B cell (primary cell): ENCODE measurements at regions of chr5 and their contacts with region 1.

Region 1: GRCh38 chr5:77030097-77031071 is at the start of gene AGGF1:
- DNase-seq: peak; percentile 89
- ATAC-seq: peak; percentile 98
- H3K4me3 ChIP-seq: peak within 1 kb of the TSS; percentile 71 to 99 (median 94)
- H3K4me3 Mint-ChIP-seq: peak within 1 kb of the TSS; percentile 96
- H3K27ac ChIP-seq: peak within 1 kb of the TSS; percentile 65 to 84
- H3K27ac Mint-ChIP-seq: peak within 1 kb of the TSS; percentile 90
- H3K4me1 ChIP-seq: peaks cover 16 to 19% of the 10 kb centered on the region in 2 donors
- H3K4me1 Mint-ChIP-seq: peaks cover 31% of the 10 kb centered on the region
- H3K27me3 ChIP-seq: no peaks in the 10 kb centered on the region
- H3K27me3 Mint-ChIP-seq: peaks cover 7% of the 10 kb centered on the region
- CTCF ChIP-seq: no peak
- total RNA-seq, gene AGGF1: 25.6 and 26.2 TPM in 2 replicates

Region 2: DNA sequence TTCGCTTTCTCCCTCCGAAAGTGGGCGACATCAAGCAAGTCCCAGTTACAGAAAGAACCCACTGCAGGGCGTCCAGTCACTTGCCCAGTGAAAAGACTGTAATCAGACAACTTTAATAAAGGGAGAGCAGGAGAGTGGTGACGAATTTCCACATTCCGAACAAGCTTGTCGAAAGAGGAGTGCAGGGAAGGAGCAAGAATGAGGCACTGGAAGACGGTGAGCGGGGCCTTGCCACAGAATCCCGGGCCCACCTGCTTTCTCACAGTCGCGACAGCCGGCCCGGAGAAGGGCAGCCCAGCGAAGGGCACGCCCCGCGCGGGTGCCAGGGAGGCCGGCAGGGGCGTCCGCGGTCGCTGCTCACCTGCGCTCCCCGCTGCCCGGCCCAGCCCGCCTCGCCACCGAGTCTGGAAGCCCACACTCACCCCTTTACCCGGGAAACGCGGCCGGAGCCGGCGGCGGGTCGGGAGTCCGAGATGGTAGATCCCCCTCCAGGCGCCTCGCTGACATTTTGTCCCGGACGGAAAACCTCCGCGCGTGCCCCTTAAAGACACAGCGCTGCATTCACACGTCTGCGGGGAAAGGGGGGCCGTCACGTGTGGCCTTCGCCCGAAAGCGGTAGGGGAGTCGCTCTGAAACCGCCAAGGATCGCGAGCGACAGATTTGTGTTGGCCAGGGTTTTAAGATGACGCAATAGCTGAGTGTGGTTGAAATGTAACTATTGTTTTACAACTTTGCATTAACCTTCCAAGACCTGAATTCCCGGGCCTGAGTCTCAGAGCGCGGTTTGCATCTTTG is 56.5 kb after region 1 on chr5 and contains the start of gene ZBED3:
- CTCF ChIA-PET with region 1: interaction called, 3 read pairs
- POLR2A ChIA-PET with region 1: interaction called, 4 read pairs
- intact Hi-C with region 1: loop called (anchors 1 kb)
- DNase-seq: peak; percentile 67
- ATAC-seq: peak; percentile 86
- H3K4me3 ChIP-seq: peak within 1 kb of the TSS; percentile 61 to 75 (median 69)
- H3K4me3 Mint-ChIP-seq: peak within 1 kb of the TSS; percentile 98
- H3K27ac ChIP-seq: peak within 1 kb of the TSS in 1 of 2 donors; percentile 11
- H3K27ac Mint-ChIP-seq: peak within 1 kb of the TSS; percentile 79
- H3K4me1 ChIP-seq: peaks cover 11 to 16% of the 10 kb centered on the region in 2 donors
- H3K4me1 Mint-ChIP-seq: peaks cover 16% of the 10 kb centered on the region
- H3K27me3 ChIP-seq: peaks cover 0 to 2% (median 0%) of the 10 kb centered on the region in 4 experiments
- H3K27me3 Mint-ChIP-seq: peaks cover 9% of the 10 kb centered on the region
- CTCF ChIP-seq: peak; percentile 31
- total RNA-seq, gene ZBED3: 1.2 and 1.6 TPM in 2 replicates

Region 3: DNA sequence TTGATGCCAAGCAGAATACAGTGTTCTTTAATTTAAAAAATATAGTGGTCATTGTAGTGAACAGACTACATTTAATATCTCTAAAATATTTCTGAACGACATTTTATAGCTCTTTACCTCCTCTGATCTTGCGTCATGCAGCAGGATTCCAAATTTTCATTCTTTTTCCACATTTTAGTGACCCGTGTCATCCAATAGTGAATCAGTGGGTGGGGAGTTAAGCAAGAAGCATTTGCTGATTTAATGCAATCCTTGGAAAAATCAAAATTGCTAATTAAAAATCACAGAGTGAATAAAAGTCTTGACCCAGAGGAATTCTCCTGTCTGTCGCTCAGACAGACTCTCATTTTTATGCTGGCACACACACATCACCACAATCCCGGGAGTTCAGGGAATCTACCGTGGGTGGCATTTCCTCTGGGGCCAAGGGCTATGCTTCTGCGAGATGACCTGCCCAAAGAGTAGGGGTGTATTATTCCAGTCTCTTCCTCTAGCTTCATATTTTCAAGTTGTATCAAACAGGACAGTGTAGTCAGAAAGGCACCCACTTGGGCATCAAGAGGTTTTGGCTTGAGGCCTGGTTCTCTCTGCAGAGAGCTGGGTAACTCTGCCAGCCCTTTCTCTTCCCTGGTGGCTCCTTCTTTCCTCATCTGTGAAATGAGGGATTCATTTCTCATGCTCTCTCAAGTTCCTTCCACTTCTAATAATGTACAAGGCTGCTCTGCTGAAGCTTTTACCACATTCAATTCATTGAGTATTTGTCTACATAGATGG is 632.9 kb after region 1 on chr5:
- CTCF ChIA-PET with region 1: no interaction called
- POLR2A ChIA-PET with region 1: no interaction called
- intact Hi-C with region 1: no loop called
- DNase-seq: no peak
- ATAC-seq: no peak
- H3K4me3 ChIP-seq: no peak overlapping the region
- H3K4me3 Mint-ChIP-seq: no peak overlapping the region
- H3K27ac ChIP-seq: no peak overlapping the region
- H3K27ac Mint-ChIP-seq: no peak overlapping the region
- H3K4me1 ChIP-seq: no peaks in the 10 kb centered on the region
- H3K4me1 Mint-ChIP-seq: no peaks in the 10 kb centered on the region
- H3K27me3 ChIP-seq: peaks cover 0 to 8% (median 0%) of the 10 kb centered on the region in 4 experiments
- H3K27me3 Mint-ChIP-seq: peaks cover 15% of the 10 kb centered on the region
- CTCF ChIP-seq: no peak